CD14-positive monocyte (primary cell): ENCODE measurements at regions of chr15 and their contacts with region 1.

Region 1: GRCh38 chr15:73972984-73973682 is 19.0 kb downstream of the STOML1 start:
- DNase-seq: peak; percentile 76 to 78 (median 78)
- H3K4me3 ChIP-seq: peak overlapping the region in 2 of 3 experiments; percentile 13 to 68
- H3K4me3 Mint-ChIP-seq: peak overlapping the region; percentile 61 to 80
- H3K27ac ChIP-seq: no peak overlapping the region
- H3K27ac Mint-ChIP-seq: no peak overlapping the region
- H3K4me1 ChIP-seq: peaks cover 18 to 22% of the 10 kb centered on the region in 2 donors
- H3K4me1 Mint-ChIP-seq: peaks cover 27% of the 10 kb centered on the region
- H3K27me3 ChIP-seq: no peaks in the 10 kb centered on the region
- H3K27me3 Mint-ChIP-seq: peaks cover 0 to 5% (median 3%) of the 10 kb centered on the region in 3 donors
- CTCF ChIP-seq: peak; percentile 76

Region 2: GRCh38 chr15:74144153-74144775 is 171.1 kb after region 1 on chr15:
- intact Hi-C with region 1: loop called in 1 of 2 experiments (anchors 10 kb)
- DNase-seq: no peak
- H3K4me3 ChIP-seq: no peak overlapping the region
- H3K4me3 Mint-ChIP-seq: no peak overlapping the region
- H3K27ac ChIP-seq: no peak overlapping the region
- H3K27ac Mint-ChIP-seq: no peak overlapping the region
- H3K4me1 ChIP-seq: no peaks in the 10 kb centered on the region
- H3K4me1 Mint-ChIP-seq: no peaks in the 10 kb centered on the region
- H3K27me3 ChIP-seq: peaks cover 31 to 50% of the 10 kb centered on the region in 2 donors
- H3K27me3 Mint-ChIP-seq: peaks cover 37 to 73% (median 45%) of the 10 kb centered on the region in 3 donors
- CTCF ChIP-seq: no peak

Region 3: GRCh38 chr15:74322181-74323076 is 349.3 kb after region 1 on chr15:
- intact Hi-C with region 1: loop called (anchors 5 to 10 kb)
- DNase-seq: peak; percentile 7 to 32 (median 12)
- H3K4me3 ChIP-seq: no peak overlapping the region
- H3K4me3 Mint-ChIP-seq: no peak overlapping the region
- H3K27ac ChIP-seq: no peak overlapping the region
- H3K27ac Mint-ChIP-seq: no peak overlapping the region
- H3K4me1 ChIP-seq: peaks cover 0 to 15% of the 10 kb centered on the region in 2 donors
- H3K4me1 Mint-ChIP-seq: peaks cover 4% of the 10 kb centered on the region
- H3K27me3 ChIP-seq: no peaks in the 10 kb centered on the region
- H3K27me3 Mint-ChIP-seq: peaks cover 6 to 12% (median 8%) of the 10 kb centered on the region in 3 donors
- CTCF ChIP-seq: peak; percentile 65